Activated CD4-positive, alpha-beta T cell treated with anti-CD3 and anti-CD28 coated beads, Interleukin-2, amount 10 ng/mL, durations not matched to agents 24 days and 14 days (primary cell): ENCODE measurements at regions of chr2 and their contacts with region 1.

Region 1: GRCh38 chr2:98508709-98509066 is 64.0 kb downstream of the INPP4A start:
- DNase-seq: peak; percentile 82
- H3K4me3 Mint-ChIP-seq: peak overlapping the region; percentile 73
- H3K27ac Mint-ChIP-seq: peak overlapping the region; percentile 91
- H3K4me1 Mint-ChIP-seq: peaks cover 69% of the 10 kb centered on the region
- H3K27me3 Mint-ChIP-seq: no peaks in the 10 kb centered on the region

Region 2: GRCh38 chr2:98487806-98488651 is 20.7 kb before region 1 on chr2:
- intact Hi-C with region 1: loop called (anchors 2 kb)
- DNase-seq: peak; percentile 83
- H3K4me3 Mint-ChIP-seq: no peak overlapping the region
- H3K27ac Mint-ChIP-seq: peak overlapping the region; percentile 65
- H3K4me1 Mint-ChIP-seq: peaks cover 76% of the 10 kb centered on the region
- H3K27me3 Mint-ChIP-seq: no peaks in the 10 kb centered on the region

Region 3: GRCh38 chr2:98552499-98553179 is 44.0 kb after region 1 on chr2:
- intact Hi-C with region 1: loop called (anchors 5 kb)
- DNase-seq: no peak
- H3K4me3 Mint-ChIP-seq: no peak overlapping the region
- H3K27ac Mint-ChIP-seq: peak overlapping the region; percentile 54
- H3K4me1 Mint-ChIP-seq: peaks cover 68% of the 10 kb centered on the region
- H3K27me3 Mint-ChIP-seq: no peaks in the 10 kb centered on the region

Region 4: GRCh38 chr2:98577313-98577712 is 68.6 kb after region 1 on chr2:
- intact Hi-C with region 1: no loop called
- DNase-seq: no peak
- H3K4me3 Mint-ChIP-seq: no peak overlapping the region
- H3K27ac Mint-ChIP-seq: no peak overlapping the region
- H3K4me1 Mint-ChIP-seq: no peaks in the 10 kb centered on the region
- H3K27me3 Mint-ChIP-seq: no peaks in the 10 kb centered on the region

Region 5: GRCh38 chr2:98736464-98736889 is 227.8 kb after region 1 on chr2:
- intact Hi-C with region 1: no loop called
- DNase-seq: peak; percentile 81
- H3K4me3 Mint-ChIP-seq: peak overlapping the region; percentile 69
- H3K27ac Mint-ChIP-seq: peak overlapping the region; percentile 80
- H3K4me1 Mint-ChIP-seq: peaks cover 58% of the 10 kb centered on the region
- H3K27me3 Mint-ChIP-seq: no peaks in the 10 kb centered on the region